PC-3 (cell line): ENCODE measurements at regions of chr7 and their contacts with region 1.

Region 1: DNA sequence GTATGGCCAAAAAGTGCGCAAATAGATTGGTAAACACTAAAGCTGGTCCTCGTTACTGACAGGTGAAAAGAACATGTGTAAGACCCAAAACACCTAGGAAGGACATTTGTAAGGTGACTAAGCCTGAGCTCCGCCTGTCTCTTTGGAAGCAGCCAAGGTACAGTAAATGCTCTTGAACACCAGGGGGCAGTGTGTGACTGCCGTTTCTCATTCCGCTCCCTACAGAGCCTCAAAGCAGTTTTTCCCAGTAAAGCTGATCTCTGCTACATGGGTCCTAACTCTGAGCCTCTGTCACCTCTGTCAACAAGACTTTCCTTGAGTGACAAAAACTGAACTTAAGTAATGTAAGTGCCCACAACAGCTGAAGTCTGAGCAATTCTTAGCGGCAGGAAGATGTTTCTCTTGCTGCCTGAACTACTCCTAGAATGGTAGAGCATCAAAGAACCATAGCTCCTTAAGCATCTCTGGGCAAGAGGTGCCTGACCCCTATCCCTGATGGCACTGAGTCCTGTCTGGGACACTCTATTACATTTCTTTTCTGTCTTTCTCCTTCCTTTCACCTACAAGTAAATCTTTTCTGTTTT is 238.0 kb upstream of the INHBA start:
- DNase-seq: peak; percentile 87
- ATAC-seq: peak; percentile 70
- H3K4me3 ChIP-seq: no peak overlapping the region
- H3K27ac ChIP-seq: no peak overlapping the region
- H3K4me1 ChIP-seq: peaks cover 7% of the 10 kb centered on the region; the same call in 1 of the 2 replicates
- H3K27me3 ChIP-seq: no peaks in the 10 kb centered on the region
- CTCF ChIP-seq: peak; percentile 85

Region 2: DNA sequence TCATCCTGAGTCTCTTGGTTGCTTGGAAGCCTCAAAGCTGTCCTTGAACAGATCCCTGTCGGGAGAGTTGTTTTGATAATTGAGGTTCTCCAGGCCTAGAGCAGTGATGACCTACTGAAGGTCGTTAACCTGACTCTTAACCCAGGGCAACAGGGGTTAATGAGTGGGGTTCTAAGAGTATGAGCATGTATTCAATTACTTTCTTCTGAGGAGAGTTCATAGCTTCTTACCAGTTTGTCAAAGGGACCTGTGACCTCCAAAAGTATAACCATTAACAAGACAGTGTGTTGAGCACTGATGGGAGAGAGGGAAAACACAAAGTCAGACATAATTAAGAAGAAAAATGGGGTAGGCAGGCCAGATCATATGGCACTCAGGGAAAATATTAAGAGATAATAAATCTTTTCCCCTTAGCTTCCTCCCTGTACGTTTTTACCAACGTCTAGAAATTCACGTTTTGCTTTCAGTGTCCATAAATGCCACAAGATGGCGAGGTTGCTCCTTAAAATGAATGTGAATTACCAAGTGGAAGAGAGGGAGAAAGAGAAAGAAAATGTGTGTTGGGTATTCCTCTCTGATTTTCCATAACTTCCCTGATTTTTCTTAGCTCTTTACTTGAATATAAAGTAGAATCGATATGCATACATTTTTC is 1708.5 kb before region 1 on chr7:
- CTCF ChIA-PET with region 1: no interaction called
- POLR2A ChIA-PET with region 1: no interaction called
- intact Hi-C with region 1: loop called (anchors 5 kb)
- DNase-seq: peak; percentile 77
- ATAC-seq: peak; percentile 84
- H3K4me3 ChIP-seq: no peak overlapping the region
- H3K27ac ChIP-seq: no peak overlapping the region
- H3K4me1 ChIP-seq: no peaks in the 10 kb centered on the region
- H3K27me3 ChIP-seq: no peaks in the 10 kb centered on the region
- CTCF ChIP-seq: peak; percentile 73

Region 3: DNA sequence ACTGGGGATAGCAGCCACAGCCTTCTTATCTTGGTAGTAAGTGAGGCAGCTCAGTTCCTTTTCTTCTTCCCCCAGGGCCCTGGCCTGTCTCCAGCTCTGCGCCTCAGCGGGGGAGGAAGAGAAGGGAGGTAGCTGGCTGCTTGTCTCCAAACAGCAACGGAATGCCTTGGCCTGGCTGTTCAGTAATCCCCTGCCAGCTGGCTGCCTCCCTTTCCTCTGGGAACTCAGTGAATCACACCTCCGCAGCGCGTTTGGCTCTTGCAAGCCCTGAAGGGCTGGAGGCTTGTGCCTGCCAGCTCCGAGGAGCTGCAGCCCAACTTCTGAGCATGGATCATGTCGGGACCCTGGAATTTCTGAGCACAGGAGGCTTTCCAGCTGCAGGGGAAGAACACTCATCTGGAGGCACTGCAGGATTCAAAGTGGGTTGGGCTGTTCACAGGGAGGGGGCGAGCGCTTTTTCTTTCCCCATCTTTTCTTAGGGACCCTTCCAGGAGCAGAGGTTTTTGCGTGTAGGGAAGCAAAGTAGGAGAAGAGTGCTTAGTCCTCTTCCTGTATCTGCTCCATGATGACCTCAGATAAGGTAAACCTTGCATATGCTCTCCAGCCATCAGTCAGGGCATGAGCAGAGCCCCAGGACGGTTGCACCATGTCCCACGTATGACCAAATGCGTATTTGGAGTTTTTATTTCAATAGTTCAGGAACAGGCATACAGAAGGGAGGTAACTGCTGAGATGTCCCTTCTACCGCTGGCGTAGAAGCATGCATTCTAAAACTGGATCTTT is 15.2 kb after region 1 on chr7:
- CTCF ChIA-PET with region 1: interaction called, 23 read pairs
- POLR2A ChIA-PET with region 1: no interaction called
- intact Hi-C with region 1: no loop called
- DNase-seq: peak; percentile 97
- ATAC-seq: peak; percentile 99
- H3K4me3 ChIP-seq: peak overlapping the region; percentile 38
- H3K27ac ChIP-seq: no peak overlapping the region
- H3K4me1 ChIP-seq: peaks cover 19% of the 10 kb centered on the region
- H3K27me3 ChIP-seq: no peaks in the 10 kb centered on the region
- CTCF ChIP-seq: no peak

Region 4: GRCh38 chr7:42237162-42237821 is 296.4 kb after region 1 on chr7 and contains the start of gene GLI3:
- CTCF ChIA-PET with region 1: no interaction called
- POLR2A ChIA-PET with region 1: no interaction called
- intact Hi-C with region 1: loop called (anchors 5 kb)
- DNase-seq: peak; percentile 88
- ATAC-seq: peak; percentile 72
- H3K4me3 ChIP-seq: peak within 1 kb of the TSS; percentile 92
- H3K27ac ChIP-seq: peak within 1 kb of the TSS; percentile 65
- H3K4me1 ChIP-seq: peaks cover 39% of the 10 kb centered on the region
- H3K27me3 ChIP-seq: no peaks in the 10 kb centered on the region
- CTCF ChIP-seq: no peak
- total RNA-seq, gene GLI3: 3.5 and 9.6 TPM in 2 replicates

Region 5: GRCh38 chr7:42639929-42640328 is 699.1 kb after region 1 on chr7:
- CTCF ChIA-PET with region 1: no interaction called
- POLR2A ChIA-PET with region 1: no interaction called
- intact Hi-C with region 1: loop called (anchors 5 kb)
- DNase-seq: peak; percentile 10
- ATAC-seq: no peak
- H3K4me3 ChIP-seq: no peak overlapping the region
- H3K27ac ChIP-seq: no peak overlapping the region
- H3K4me1 ChIP-seq: no peaks in the 10 kb centered on the region
- H3K27me3 ChIP-seq: no peaks in the 10 kb centered on the region
- CTCF ChIP-seq: peak; percentile 61

Region 6: GRCh38 chr7:42831718-42832431 is 891.0 kb after region 1 on chr7:
- CTCF ChIA-PET with region 1: interaction called, 13 read pairs
- POLR2A ChIA-PET with region 1: no interaction called
- intact Hi-C with region 1: loop called (anchors 1 kb)
- DNase-seq: peak; percentile 70
- ATAC-seq: peak; percentile 97
- H3K4me3 ChIP-seq: peak overlapping the region; percentile 50
- H3K27ac ChIP-seq: no peak overlapping the region
- H3K4me1 ChIP-seq: peaks cover 17% of the 10 kb centered on the region; the same call in 1 of the 2 replicates
- H3K27me3 ChIP-seq: no peaks in the 10 kb centered on the region; the same call in 1 of the 2 replicates
- CTCF ChIP-seq: peak; percentile 87

Region 7: DNA sequence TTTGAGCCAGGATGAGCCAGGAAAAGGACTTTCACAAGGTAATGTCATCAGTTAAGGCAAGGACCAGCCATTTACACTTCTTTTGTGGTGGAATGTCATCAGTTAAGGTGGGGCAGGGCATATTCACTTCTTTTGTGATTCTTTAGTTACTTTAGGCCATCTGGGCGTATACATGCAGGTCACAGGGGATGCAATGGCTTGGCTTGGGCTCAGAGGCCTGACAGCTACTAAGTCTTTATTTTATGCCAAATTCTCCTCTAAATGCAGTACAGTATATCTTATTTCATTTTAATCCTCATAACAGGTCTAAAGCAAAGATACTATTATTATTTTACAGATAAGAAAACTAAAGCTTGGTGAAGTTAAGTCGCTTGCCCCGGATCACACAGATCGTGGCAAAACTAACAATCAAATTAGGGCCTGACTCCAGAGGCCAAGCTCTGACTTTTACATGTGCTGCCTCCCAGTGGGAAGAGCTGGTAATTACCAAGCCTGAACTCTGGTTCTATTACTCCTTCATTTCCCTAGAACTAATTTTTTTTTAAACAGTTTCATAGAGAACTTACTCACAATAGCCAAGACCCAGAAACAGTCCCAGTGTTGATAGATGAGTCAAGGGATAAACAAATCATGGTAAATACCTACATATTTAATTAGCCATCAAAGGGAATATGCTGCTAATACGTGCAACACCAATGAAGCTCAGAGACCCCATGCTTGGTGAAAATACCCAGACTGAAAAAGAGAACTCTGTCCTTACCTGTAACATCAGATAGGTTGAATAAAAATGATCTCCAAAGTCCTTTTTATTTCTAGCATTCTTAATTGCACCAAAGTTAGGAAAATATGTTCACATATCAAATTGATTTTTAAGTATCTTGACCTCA is 935.6 kb after region 1 on chr7:
- CTCF ChIA-PET with region 1: interaction called, 16 read pairs
- POLR2A ChIA-PET with region 1: no interaction called
- intact Hi-C with region 1: loop called (anchors 1 kb)
- DNase-seq: peak; percentile 75
- ATAC-seq: peak; percentile 85
- H3K4me3 ChIP-seq: no peak overlapping the region
- H3K27ac ChIP-seq: no peak overlapping the region
- H3K4me1 ChIP-seq: peaks cover 4% of the 10 kb centered on the region; the same call in 1 of the 2 replicates
- H3K27me3 ChIP-seq: no peaks in the 10 kb centered on the region
- CTCF ChIP-seq: peak; percentile 78